MCF 10A (cell line): ENCODE measurements at regions of chr7 and their contacts with region 1.

Region 1: DNA sequence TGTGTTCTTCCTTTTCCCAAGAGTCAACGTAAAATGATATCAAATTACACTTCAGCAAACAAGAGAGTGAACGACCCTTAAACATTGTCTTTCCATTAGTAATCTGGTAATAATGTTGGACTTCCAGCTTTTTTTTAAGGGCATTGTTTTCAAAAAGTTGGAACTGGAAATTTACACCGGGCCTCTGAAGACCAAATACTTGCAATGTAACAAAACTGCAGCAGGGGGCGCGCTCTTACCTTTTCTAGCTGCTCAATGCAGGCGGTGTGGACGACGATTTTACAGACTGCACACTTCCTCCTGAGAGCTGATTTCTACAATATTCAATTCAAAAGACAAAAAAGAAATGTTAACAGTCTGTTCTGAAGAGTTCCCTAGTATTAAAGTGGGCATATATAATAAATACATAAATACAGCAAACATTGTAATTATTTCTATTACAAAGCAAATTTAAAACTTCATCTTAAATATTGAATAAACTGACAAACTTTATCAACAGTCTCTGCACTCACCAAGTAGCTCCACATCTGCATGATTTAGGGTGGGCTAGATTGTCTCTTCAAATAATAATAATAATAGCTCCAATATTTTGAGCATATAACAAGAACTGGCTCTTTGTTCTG is 190.4 kb downstream of the DGKI start:
- DNase-seq: peak; percentile 77
- H3K4me3 Mint-ChIP-seq: no peak overlapping the region
- H3K27ac Mint-ChIP-seq: no peak overlapping the region
- H3K4me1 Mint-ChIP-seq: no peaks in the 10 kb centered on the region
- H3K27me3 Mint-ChIP-seq: no peaks in the 10 kb centered on the region
- CTCF ChIP-seq: peak; percentile 82

Region 2: GRCh38 chr7:137606061-137606674 is 50.2 kb before region 1 on chr7:
- CTCF ChIA-PET with region 1: interaction called, 20 read pairs
- POLR2A ChIA-PET with region 1: no interaction called
- intact Hi-C with region 1: no loop called
- DNase-seq: peak; percentile 47
- H3K4me3 Mint-ChIP-seq: no peak overlapping the region
- H3K27ac Mint-ChIP-seq: no peak overlapping the region
- H3K4me1 Mint-ChIP-seq: no peaks in the 10 kb centered on the region
- H3K27me3 Mint-ChIP-seq: peaks cover 46% of the 10 kb centered on the region
- CTCF ChIP-seq: peak; percentile 35

Region 3: DNA sequence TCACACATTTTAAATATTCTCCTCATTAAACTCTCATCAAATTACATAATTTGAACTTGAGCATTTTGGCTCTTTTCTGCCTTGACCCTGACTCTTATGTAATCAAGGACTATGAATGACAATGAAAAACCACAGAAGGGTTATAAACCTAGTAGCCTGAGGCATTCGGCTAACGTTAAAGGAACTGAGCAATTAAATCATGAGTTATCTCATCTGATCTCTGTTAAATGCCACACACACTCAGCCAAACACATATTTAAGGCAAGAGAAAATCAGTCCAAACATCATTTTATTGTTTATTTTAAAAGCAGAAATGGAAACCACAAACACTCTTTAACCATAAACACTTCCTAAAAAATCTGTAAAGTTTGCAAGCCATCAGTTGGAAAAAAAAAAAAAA is 13.9 kb before region 1 on chr7:
- CTCF ChIA-PET with region 1: interaction called, 11 read pairs
- POLR2A ChIA-PET with region 1: interaction called, 4 read pairs
- intact Hi-C with region 1: no loop called
- DNase-seq: peak; percentile 71
- H3K4me3 Mint-ChIP-seq: no peak overlapping the region
- H3K27ac Mint-ChIP-seq: no peak overlapping the region
- H3K4me1 Mint-ChIP-seq: peaks cover 5% of the 10 kb centered on the region
- H3K27me3 Mint-ChIP-seq: peaks cover 12% of the 10 kb centered on the region
- CTCF ChIP-seq: no peak

Region 4: GRCh38 chr7:137816696-137817320 is 160.5 kb after region 1 on chr7:
- CTCF ChIA-PET with region 1: interaction called, 6 read pairs
- POLR2A ChIA-PET with region 1: no interaction called
- intact Hi-C with region 1: loop called (anchors 1 kb)
- DNase-seq: peak; percentile 17
- H3K4me3 Mint-ChIP-seq: no peak overlapping the region
- H3K27ac Mint-ChIP-seq: no peak overlapping the region
- H3K4me1 Mint-ChIP-seq: no peaks in the 10 kb centered on the region
- H3K27me3 Mint-ChIP-seq: no peaks in the 10 kb centered on the region
- CTCF ChIP-seq: no peak

Region 5: GRCh38 chr7:137888241-137888640 is 231.9 kb after region 1 on chr7:
- CTCF ChIA-PET with region 1: interaction called, 71 read pairs
- POLR2A ChIA-PET with region 1: interaction called, 3 read pairs
- intact Hi-C with region 1: no loop called
- DNase-seq: no peak
- H3K4me3 Mint-ChIP-seq: no peak overlapping the region
- H3K27ac Mint-ChIP-seq: no peak overlapping the region
- H3K4me1 Mint-ChIP-seq: peaks cover 7% of the 10 kb centered on the region
- H3K27me3 Mint-ChIP-seq: no peaks in the 10 kb centered on the region
- CTCF ChIP-seq: no peak

Region 6: GRCh38 chr7:138002096-138002827 is 345.9 kb after region 1 on chr7:
- CTCF ChIA-PET with region 1: interaction called, 32 read pairs
- POLR2A ChIA-PET with region 1: interaction called, 3 read pairs
- intact Hi-C with region 1: no loop called
- DNase-seq: peak; percentile 99
- H3K4me3 Mint-ChIP-seq: peak overlapping the region; percentile 93
- H3K27ac Mint-ChIP-seq: peak overlapping the region; percentile 62
- H3K4me1 Mint-ChIP-seq: peaks cover 23% of the 10 kb centered on the region
- H3K27me3 Mint-ChIP-seq: no peaks in the 10 kb centered on the region
- CTCF ChIP-seq: peak; percentile 95